OCI-LY7 (cell line): ENCODE measurements at regions of chr4 and their contacts with region 1.

Region 1: DNA sequence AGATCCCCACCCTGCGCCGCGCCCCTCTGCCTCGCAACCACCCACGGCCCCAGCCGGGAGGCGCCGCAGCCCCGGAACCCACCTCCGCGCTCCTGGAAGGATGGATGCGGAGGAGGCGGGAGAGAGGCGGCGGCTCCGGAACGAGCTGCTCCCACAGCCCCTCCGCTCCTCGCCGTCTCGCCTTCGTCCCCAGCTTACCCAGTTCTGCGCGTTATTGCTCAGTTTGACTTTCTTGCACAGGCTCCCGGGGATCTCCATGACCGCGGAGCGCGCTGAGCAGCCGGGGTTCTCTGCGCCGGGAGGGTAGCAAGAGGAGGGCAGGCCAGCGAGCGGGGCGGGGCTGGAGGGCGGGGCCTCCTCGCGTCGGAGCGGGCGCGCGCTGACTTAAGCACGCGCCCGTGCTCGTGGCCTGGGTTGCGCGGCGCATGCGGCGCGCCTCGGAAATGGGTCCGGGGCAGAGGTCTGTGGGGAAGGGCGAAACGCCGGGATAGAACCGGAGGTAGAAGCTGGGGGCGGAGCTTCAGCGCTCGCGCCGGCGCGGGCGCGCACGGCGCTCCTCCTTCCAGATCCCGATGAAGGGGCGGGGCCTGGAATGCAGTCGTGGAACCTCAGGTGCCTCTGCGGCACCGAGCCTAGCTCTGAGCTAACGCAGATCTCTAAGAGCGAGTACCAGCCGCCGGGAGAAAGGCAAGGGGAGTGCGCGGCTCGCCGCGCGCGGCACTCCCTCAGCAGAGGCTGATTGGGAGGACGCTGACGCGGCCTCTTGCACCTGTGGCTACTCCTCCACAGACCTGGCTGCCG is at the start of gene PAPSS1:
- DNase-seq: peak; percentile 96
- H3K4me3 ChIP-seq: peak within 1 kb of the TSS; percentile 85
- H3K27ac ChIP-seq: peak within 1 kb of the TSS; percentile 81
- H3K4me1 ChIP-seq: peaks cover 40% of the 10 kb centered on the region
- CTCF ChIP-seq: no peak; the same call in 1 of the 2 replicates
- total RNA-seq, gene PAPSS1: 57.4 and 62.0 TPM in 2 replicates

Region 2: GRCh38 chr4:106315968-106316772 is 1404.0 kb before region 1 on chr4 and contains the starts of genes AIMP1 and TBCK:
- CTCF ChIA-PET with region 1: no interaction called
- POLR2A ChIA-PET with region 1: interaction called, 4 read pairs
- intact Hi-C with region 1: loop called (anchors 5 kb)
- DNase-seq: peak; percentile 92
- H3K4me3 ChIP-seq: peak within 1 kb of the TSS; percentile 92
- H3K27ac ChIP-seq: peak within 1 kb of the TSS; percentile 75
- H3K4me1 ChIP-seq: peaks cover 24% of the 10 kb centered on the region
- CTCF ChIP-seq: no peak
- total RNA-seq, gene AIMP1: 17.4 and 26.7 TPM in 2 replicates
- total RNA-seq, gene TBCK: 30.2 and 46.5 TPM in 2 replicates

Region 3: GRCh38 chr4:107709916-107710315 is 10.2 kb before region 1 on chr4:
- CTCF ChIA-PET with region 1: no interaction called
- POLR2A ChIA-PET with region 1: interaction called, 26 read pairs
- intact Hi-C with region 1: no loop called
- DNase-seq: no peak
- H3K4me3 ChIP-seq: no peak overlapping the region
- H3K27ac ChIP-seq: no peak overlapping the region
- H3K4me1 ChIP-seq: no peaks in the 10 kb centered on the region
- CTCF ChIP-seq: no peak

Region 4: DNA sequence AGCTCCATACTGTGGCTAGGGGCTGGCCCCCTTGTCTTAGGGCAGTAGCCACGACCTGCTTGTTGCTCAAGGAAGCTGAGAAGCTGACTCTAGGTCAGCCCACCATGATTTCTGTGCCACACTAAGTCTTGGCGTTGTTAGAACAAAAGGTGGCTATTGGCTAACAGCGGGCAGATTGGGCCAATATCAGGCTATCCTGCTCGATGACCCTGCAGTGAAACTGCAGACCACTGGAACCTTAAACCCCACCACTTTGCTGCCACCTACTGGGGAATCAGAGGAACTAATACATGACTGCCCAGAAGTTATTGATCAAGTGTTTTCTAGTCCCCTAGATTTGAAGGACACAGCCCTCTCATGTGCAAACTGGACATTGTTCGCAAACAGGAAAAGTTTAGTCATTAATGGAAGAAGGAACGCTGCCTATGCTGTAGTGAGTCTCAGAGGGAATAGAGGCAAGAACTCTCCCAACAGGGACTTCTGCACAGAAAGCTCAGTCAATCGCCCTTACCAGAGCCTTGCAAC is 16.9 kb after region 1 on chr4:
- CTCF ChIA-PET with region 1: interaction called, 3 read pairs
- POLR2A ChIA-PET with region 1: interaction called, 13 read pairs
- intact Hi-C with region 1: no loop called
- DNase-seq: peak; percentile 63
- H3K4me3 ChIP-seq: no peak overlapping the region
- H3K27ac ChIP-seq: no peak overlapping the region
- H3K4me1 ChIP-seq: no peaks in the 10 kb centered on the region
- CTCF ChIP-seq: peak; percentile 91

Region 5: DNA sequence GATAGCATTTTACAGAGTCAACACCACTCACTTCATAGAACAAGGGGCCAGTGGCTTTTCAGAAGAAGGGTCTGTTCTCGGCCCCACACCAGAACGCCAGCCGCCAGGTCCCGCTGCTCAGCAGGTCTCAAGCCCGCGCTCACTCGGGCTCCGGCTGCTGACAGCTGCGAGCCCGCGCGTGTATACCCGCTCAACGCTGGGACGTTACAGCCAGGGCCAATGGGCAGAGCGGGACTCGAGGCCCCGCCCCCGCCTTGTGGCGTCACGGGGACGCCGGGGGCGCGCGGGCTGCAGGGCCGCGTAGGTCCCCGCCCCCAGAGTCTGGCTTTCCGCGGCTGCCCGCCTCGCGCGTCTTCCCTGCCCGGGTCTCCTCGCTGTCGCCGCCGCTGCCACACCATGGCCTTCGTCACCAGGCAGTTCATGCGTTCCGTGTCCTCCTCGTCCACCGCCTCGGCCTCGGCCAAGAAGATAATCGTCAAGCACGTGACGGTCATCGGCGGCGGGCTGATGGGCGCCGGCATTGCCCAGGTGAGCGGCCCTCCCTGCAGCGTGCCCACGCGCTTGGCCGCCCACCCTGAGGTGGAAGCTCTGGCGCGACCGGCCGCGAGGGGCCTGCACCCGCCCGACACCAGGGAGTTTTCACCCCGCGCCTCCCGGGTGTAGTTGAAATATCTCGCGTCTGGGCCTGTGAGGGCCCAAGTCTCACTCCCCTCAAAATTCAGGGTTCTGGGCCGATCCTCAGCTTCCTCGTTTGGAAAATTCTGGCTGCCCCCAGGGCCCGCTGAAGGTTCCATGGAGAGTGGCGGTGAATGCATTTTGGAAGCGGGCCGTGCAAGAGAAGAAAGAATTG is 269.6 kb after region 1 on chr4 and contains the start of gene HADH:
- CTCF ChIA-PET with region 1: no interaction called
- POLR2A ChIA-PET with region 1: interaction called, 10 read pairs
- intact Hi-C with region 1: loop called (anchors 2 kb)
- DNase-seq: peak; percentile 96
- H3K4me3 ChIP-seq: peak within 1 kb of the TSS; percentile 99
- H3K27ac ChIP-seq: peak within 1 kb of the TSS; percentile 63
- H3K4me1 ChIP-seq: peaks cover 46% of the 10 kb centered on the region
- CTCF ChIP-seq: no peak
- total RNA-seq, gene HADH: 31.2 and 32.3 TPM in 2 replicates

Region 6: GRCh38 chr4:108166441-108167315 is 446.6 kb after region 1 on chr4:
- CTCF ChIA-PET with region 1: no interaction called
- POLR2A ChIA-PET with region 1: interaction called, 5 read pairs
- intact Hi-C with region 1: loop called (anchors 2 kb)
- DNase-seq: peak; percentile 79
- H3K4me3 ChIP-seq: peak overlapping the region; percentile 83
- H3K27ac ChIP-seq: peak overlapping the region; percentile 89
- H3K4me1 ChIP-seq: peaks cover 52% of the 10 kb centered on the region
- CTCF ChIP-seq: peak; percentile 38; the same call in 1 of the 2 replicates

Region 7: GRCh38 chr4:108210989-108211835 is 491.1 kb after region 1 on chr4:
- CTCF ChIA-PET with region 1: no interaction called
- POLR2A ChIA-PET with region 1: no interaction called
- intact Hi-C with region 1: no loop called
- DNase-seq: no peak
- H3K4me3 ChIP-seq: no peak overlapping the region
- H3K27ac ChIP-seq: no peak overlapping the region
- H3K4me1 ChIP-seq: no peaks in the 10 kb centered on the region
- CTCF ChIP-seq: no peak